ENCODE measurements at regions of chr10 and their contacts with region 1.

Region 1: GRCh38 chr10:5692461-5693358 is 8.1 kb downstream of the TASOR2 start:
- DNase-seq: peak; percentile 91
- H3K4me3 Mint-ChIP-seq: peak overlapping the region; percentile 83
- H3K27ac Mint-ChIP-seq: peak overlapping the region; percentile 81
- H3K4me1 Mint-ChIP-seq: peaks cover 42% of the 10 kb centered on the region
- H3K27me3 Mint-ChIP-seq: no peaks in the 10 kb centered on the region

Region 2: DNA sequence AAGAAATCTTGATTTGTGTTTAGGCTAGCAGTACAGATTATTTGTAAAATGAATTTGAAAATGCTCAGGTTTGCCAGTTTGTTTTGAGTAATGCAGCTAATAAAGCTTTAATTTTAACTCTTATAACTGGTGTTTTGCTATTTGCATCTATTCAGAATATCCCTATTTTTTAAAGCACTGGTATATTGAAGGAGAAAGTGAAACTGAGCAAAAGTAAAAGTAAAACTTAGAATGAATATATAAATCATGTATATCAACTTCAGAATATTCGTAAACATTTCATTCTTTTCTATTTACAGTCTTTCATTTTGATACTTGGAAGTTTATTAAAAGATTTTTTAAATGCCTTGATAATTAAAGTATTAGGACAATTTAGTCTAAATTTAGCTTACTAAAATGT is 18.1 kb after region 1 on chr10:
- intact Hi-C with region 1: loop called (anchors 2 kb)
- DNase-seq: no peak
- H3K4me3 Mint-ChIP-seq: peak overlapping the region; percentile 76
- H3K27ac Mint-ChIP-seq: no peak overlapping the region
- H3K4me1 Mint-ChIP-seq: peaks cover 38% of the 10 kb centered on the region
- H3K27me3 Mint-ChIP-seq: no peaks in the 10 kb centered on the region

Region 3: GRCh38 chr10:5889624-5890451 is 197.1 kb after region 1 on chr10 and contains the starts of genes ANKRD16 and FBH1:
- intact Hi-C with region 1: loop called (anchors 5 kb)
- DNase-seq: peak; percentile 100
- H3K4me3 Mint-ChIP-seq: peak within 1 kb of the TSS; percentile 94
- H3K27ac Mint-ChIP-seq: peak within 1 kb of the TSS; percentile 85
- H3K4me1 Mint-ChIP-seq: peaks cover 40% of the 10 kb centered on the region
- H3K27me3 Mint-ChIP-seq: no peaks in the 10 kb centered on the region
- total RNA-seq, gene ANKRD16: 10.8 and 12.2 TPM in 2 replicates
- total RNA-seq, gene FBH1: 58.4 and 62.9 TPM in 2 replicates

Measured in activated CD4-positive, alpha-beta T cell treated with anti-CD3 and anti-CD28 coated beads, Interleukin-2, amount 10 ng/mL, durations not matched to agents 24 days and 14 days (primary cell).